ENCODE measurements at regions of chrX and their contacts with region 1.

Region 1: DNA sequence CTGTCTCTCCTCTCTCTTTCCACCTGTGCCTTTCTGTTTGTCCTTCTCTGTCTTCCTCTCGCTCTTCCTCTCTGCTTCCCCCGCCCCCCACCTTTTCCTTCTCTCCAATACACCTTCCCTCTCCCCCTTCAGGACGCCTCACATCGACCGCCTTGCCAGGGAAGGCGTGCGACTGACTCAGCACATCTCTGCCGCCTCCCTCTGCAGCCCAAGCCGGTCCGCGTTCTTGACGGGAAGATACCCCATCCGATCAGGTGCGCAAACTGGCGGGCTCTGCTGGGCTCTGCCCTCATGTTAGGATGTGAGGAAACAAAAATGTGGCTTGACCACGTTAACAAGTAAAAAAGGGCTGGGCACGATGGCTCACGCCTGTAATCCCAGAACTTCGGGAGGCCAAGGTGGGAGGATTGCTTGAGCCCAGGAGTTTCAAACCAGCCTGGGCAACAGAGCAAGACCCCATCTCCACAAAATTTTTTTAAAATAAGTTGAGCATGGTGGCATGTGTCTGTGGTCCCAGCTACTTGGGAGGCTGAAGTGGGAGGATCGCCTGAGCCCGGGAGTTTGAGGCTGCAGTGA is 35.2 kb downstream of the ARSF start:
- DNase-seq: no peak

Region 2: GRCh38 chrX:2677764-2678163 is 398.7 kb before region 1 on chrX:
- intact Hi-C with region 1: no loop called
- DNase-seq: peak; percentile 95

Region 3: DNA sequence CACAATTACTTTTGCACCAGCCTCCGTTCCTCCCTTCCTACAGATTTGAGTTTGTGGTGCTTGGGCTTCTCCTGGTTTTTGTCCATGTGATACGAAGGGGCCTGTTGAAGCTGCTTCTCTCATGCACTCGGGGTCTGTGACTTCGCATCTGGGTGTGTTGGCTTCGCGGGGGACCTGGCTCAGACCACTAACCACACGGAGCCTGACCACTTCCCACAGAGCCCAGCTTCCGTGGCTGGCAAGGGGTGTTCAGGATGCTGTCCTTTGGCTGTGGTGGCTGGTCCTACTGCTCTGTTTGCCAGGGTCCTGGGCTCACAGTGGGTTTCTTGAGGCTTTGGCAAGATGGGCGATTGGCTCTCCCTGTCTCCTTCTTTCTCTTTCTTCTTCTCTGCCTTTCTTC is 344.4 kb before region 1 on chrX:
- intact Hi-C with region 1: loop called in 1 of 2 experiments (anchors 5 kb)
- DNase-seq: no peak